HEK293T (cell line): ENCODE measurements at regions of chr11 and their contacts with region 1.

Region 1: DNA sequence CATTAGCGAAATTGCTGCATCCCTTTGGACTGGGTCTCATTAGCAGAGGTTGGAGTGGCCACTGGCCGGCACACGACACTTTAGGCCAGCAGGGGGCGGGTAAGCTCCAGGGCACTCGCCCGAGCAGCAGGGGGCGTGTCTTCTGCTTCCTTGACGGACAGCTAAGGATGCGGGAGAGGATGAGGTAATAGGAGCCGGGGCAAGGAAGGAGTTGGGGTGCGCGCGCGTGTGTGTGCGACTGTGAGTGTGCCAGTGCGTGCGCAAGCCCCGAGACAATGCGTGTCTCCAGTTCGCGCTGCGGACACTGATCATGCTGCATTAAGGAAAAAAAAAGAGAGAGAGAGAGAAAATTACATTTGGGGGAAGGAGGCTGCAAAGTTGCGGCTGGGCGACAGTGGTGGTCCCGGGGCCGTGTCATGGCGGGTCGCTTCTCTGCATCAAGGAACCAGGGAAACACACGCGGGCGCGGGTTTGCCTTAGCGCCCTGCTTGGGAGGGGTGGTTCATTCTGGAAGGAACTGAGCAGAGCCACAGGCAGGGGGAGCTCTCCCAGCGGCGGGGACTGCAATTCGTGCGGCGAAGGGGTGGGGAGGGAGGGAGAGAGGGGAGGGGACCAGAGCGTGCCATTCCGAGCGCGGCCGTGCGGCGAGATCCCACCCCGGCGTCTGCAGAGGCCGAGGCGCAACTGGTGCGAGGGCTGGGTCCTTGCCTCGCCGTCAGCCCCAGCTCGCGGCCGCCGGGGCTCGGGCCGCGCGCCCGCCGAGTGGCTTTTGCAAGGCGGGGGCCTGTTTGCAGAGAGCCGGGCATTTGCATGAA is at the start of gene DTX4:
- DNase-seq: peak; percentile 85

Region 2: DNA sequence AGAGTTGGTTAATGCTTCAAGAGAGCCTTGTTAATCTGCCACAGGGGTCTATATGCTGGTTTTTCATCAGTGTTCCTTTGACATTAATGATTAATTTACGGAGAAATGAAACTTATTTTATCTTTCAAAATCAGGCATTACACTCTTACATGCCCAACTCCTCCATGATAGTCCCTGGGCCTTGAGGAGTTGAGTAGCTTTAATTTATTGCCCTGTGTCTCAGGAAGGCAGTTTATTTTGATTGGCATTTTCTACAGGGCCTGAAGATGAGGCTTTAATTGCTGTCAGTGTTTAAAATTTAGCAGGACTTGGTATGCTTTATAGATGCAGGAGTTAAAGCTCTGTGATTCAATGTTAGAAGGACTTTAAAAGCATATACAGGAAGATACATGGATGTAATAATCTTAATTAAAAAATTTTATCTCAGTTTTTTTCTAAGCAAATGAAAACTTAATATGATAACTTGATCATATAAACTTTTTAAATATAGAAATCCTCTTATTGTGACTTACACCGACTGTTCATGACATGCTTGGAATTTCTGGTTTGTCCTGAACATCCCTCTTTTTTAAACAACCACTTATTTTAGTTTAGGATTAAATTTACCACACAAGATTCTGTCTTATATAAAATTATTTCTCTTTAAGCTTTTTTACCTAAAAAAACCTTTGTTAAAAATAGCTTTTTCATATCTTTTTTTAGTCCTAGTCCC is 452.2 kb before region 1 on chr11:
- CTCF ChIA-PET with region 1: no interaction called
- POLR2A ChIA-PET with region 1: no interaction called
- DNase-seq: no peak

Region 3: DNA sequence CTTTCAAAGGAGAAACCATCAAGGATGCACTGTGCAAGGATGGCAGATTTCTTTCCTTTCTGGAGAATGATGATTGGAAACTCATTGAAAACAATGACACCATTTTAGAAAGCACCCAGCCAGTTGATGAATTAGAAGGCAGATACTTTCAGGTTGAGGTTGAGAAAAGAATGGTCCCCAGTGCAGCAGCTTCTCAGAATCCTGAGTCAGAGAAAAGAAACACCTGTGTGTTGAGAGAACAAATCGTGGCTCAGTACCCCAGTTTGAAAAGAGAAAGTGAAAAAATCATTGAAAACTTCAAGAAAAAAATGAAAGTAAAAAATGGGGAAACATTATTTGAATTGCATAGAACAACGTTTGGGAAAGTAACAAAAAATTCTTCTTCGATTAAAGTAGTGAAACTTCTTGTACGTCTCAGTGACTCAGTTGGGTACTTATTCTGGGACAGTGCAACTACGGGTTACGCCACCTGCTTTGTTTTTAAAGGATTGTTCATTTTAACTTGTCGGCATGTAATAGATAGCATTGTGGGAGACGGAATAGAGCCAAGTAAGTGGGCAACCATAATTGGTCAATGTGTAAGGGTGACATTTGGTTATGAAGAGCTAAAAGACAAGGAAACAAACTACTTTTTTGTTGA is 19.3 kb before region 1 on chr11:
- CTCF ChIA-PET with region 1: no interaction called
- POLR2A ChIA-PET with region 1: no interaction called
- DNase-seq: no peak

Region 4: DNA sequence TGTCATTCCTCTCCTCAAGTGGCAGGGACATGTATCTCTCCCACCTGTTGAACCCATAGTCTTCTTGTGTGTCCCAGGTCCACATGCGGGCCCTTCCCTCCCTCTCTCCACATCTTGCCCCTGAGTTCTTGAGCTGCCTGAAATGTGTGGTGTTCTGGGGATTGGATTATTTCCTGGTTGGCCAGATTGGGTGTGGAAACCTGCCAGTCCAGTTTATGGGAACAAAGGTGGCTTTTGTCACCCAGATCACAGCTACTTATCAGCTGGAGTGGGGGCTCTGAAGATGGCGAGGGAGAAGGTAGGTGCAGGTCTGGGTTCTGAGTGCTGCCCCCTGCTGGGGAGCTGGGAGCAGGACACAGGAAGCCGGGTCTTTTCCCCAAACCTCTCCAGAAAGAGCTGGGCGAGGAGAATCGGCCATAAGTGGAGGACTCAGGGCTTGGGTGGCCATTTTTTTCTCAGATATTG is 14.4 kb after region 1 on chr11:
- CTCF ChIA-PET with region 1: interaction called, 13 read pairs
- POLR2A ChIA-PET with region 1: no interaction called
- DNase-seq: peak; percentile 56